ENCODE measurements at regions of chr5 and their contacts with region 1.

Region 1: DNA sequence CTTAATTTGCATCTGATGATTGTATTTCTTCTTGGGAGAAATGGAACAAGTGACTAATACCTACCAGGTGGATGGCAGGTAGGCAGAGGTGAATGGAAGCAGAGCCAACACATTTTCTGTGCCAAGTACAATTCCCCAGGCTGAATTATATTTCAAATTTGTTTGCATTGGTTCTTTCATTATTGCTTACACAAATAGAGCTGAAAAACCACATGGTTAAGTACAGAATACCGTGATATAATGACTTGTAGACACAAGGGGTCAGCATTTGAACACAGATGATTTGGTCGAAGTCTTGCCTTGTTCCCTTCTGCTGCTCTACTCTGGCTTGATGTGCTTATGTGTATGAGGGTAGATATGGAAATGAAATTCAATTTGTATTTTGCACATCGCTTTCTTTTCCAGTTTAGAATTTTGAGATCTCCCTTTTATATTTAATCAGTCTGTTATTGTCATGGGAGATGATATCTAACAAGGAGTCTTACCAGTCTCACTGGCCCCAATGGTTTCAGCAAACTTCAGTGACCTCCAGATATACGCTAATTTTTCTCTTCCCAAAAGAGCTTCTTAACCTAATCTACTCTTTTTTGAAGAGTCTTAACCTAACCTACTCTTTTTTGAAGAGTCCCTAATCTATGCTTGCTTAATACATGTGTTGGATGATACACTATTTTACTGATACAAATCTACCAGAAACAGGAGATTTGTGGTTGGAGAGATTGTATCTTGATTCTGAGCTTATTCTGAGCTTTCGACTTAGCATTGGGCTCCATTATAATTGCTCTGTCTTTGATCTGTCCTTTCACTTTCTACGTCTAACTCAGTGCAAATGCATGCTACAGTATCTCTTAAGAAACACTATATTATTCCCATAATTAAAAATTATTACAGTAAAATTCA is 88.1 kb downstream of the PCSK1 start:
- DNase-seq: no peak
- H3K4me3 ChIP-seq: no peak overlapping the region
- H3K27ac ChIP-seq: no peak overlapping the region
- H3K4me1 ChIP-seq: no peaks in the 10 kb centered on the region
- H3K27me3 ChIP-seq: no peaks in the 10 kb centered on the region
- CTCF ChIP-seq: peak in 3 of 4 experiments; percentile 28 to 44 (median 36)
- EP300 ChIP-seq: no peak
- POLR2A ChIP-seq: no peak

Region 2: GRCh38 chr5:96463106-96463505 is 118.2 kb after region 1 on chr5:
- intact Hi-C with region 1: no loop called
- DNase-seq: no peak
- H3K4me3 ChIP-seq: no peak overlapping the region
- H3K27ac ChIP-seq: no peak overlapping the region
- H3K4me1 ChIP-seq: no peaks in the 10 kb centered on the region
- H3K27me3 ChIP-seq: no peaks in the 10 kb centered on the region
- CTCF ChIP-seq: no peak
- EP300 ChIP-seq: no peak
- POLR2A ChIP-seq: no peak

Region 3: DNA sequence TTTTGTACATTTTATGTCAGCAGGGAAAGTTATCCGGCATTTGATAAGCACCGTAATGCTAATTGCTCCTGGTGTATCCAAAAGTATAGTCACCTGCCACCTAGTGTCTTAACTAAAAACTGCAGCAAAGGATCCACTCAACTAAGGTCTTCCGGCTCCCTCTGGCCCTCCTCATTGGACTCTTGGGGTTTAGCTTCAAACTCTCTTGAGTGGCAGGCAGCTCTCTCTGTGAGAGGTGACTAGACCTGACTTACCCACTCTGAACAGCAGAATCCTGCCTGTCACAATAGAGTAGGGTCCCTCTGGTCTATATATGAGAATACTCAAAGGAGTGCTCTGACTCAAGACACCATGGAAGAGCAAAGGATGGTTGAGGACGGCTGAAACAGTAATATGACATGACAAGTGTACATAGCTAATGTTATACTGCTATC is 256.9 kb after region 1 on chr5:
- intact Hi-C with region 1: loop called (anchors 1 kb)
- DNase-seq: no peak
- H3K4me3 ChIP-seq: no peak overlapping the region
- H3K27ac ChIP-seq: no peak overlapping the region
- H3K4me1 ChIP-seq: no peaks in the 10 kb centered on the region
- H3K27me3 ChIP-seq: no peaks in the 10 kb centered on the region
- CTCF ChIP-seq: peak; percentile 37 to 75 (median 59)
- EP300 ChIP-seq: no peak
- POLR2A ChIP-seq: no peak